ENCODE measurements at regions of chr22 and their contacts with region 1.

Region 1: GRCh38 chr22:28009272-28009827 is 90.3 kb upstream of the PITPNB start:
- DNase-seq: peak; percentile 52 to 93
- H3K4me3 ChIP-seq: no peak overlapping the region
- CTCF ChIP-seq: peak in 1 of 3 donors; percentile 80
- POLR2A ChIP-seq: no peak

Region 2: DNA sequence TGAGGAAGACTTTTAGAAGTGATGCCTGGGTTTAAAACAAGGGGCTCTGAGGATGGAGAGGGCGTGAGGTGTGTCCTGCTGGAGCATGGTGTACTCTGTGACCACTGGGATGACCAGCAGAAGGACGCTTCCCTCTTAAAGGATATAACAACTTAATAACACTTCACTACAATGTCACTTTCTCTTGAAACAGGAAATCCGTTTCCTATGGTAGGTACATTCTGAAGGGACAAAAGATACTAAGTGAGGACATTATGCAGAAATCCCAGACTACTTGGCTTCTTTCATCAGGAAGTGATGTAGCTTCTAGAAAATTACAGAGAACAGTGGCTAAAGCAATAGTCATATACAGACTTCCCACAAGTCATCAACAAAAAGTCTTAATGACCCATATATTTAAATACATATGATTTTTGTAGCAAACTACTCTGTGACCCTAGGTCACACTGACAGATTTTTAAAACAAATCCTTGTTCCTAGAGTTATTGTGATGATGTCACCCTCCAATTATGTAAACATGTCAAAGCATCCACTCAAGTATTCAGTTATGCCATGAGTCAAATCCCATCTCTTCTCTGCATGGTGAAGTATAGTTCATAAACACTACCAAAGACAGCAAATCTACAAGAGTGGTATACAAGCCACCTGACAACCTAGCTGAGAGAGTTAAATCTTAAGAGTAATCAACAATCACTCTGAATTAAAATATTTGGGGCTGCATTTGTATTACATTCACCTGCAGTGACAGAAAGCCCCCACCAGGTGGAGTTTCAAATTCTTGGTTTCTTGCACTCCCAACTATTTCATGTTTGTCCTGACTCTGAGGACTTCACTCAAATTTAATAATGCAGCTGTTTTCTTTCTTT is 123.1 kb before region 1 on chr22:
- intact Hi-C with region 1: loop called (anchors 2 kb)
- DNase-seq: no peak
- H3K4me3 ChIP-seq: no peak overlapping the region
- CTCF ChIP-seq: peak in 1 of 3 donors; percentile 76
- POLR2A ChIP-seq: no peak

Region 3: GRCh38 chr22:28620244-28620922 is 611.0 kb after region 1 on chr22:
- intact Hi-C with region 1: no loop called
- DNase-seq: no peak
- H3K4me3 ChIP-seq: no peak overlapping the region
- CTCF ChIP-seq: no peak
- POLR2A ChIP-seq: no peak

Measured in lower leg skin (tissue), 4 donors.